ENCODE measurements at regions of chr12 and their contacts with region 1.

Region 1: GRCh38 chr12:3299929-3300832 is 190.8 kb upstream of the PRMT8 start:
- DNase-seq: peak; percentile 70
- H3K4me3 ChIP-seq: peak overlapping the region; percentile 32
- CTCF ChIP-seq: peak; percentile 94

Region 2: GRCh38 chr12:3102691-3103410 is 197.3 kb before region 1 on chr12:
- CTCF ChIA-PET with region 1: interaction called, 11 read pairs
- POLR2A ChIA-PET with region 1: no interaction called
- DNase-seq: no peak
- H3K4me3 ChIP-seq: no peak overlapping the region
- CTCF ChIP-seq: no peak

Region 3: DNA sequence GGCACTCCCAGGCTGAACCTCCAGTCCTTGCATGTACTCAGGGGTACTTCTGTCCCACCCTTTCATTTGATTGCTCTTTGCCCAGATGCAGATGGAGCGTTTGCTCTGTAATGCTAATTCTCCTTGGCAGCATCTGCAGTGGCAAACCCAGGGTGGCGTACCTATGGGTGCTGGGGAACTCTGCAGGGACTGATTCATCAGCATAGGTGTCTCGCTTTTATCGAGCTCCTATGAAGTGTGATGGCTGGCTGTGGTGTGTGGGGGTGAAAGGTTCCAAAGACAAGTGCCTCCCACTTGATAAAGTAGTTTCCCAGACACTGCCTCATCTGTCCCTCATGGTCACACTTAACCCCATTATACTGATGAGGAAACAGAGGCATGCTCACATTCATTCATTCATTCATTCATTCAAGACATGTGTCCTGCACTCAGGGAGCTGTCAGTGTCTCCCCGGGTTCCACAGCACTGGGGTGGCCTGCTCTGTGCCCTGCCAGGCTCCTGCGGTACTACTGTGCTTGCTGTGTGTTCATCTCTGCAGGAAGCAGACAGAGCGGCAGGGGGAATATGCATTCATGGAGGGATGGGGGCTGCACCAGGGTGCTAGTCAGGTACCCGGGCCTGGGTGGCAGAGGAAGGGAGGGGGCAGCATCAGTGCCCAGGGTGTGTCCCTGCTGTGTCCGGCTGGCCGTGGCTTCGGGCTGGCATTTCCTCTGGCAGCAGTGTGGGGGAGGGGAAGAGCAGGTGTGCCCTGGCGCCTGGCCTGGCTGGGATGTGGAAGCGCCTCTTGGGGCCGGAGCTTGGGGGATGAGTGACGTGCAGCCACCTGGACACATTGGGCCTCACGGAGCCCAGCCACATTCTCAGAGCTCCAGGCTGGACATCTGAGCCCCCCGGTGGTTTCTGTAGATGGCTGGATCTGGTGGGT is 112.1 kb before region 1 on chr12:
- CTCF ChIA-PET with region 1: no interaction called
- POLR2A ChIA-PET with region 1: no interaction called
- DNase-seq: no peak
- H3K4me3 ChIP-seq: no peak overlapping the region
- CTCF ChIP-seq: no peak

Region 4: GRCh38 chr12:3288690-3289089 is 11.5 kb before region 1 on chr12:
- CTCF ChIA-PET with region 1: interaction called, 85 read pairs
- POLR2A ChIA-PET with region 1: no interaction called
- DNase-seq: no peak
- H3K4me3 ChIP-seq: no peak overlapping the region
- CTCF ChIP-seq: no peak

Region 5: DNA sequence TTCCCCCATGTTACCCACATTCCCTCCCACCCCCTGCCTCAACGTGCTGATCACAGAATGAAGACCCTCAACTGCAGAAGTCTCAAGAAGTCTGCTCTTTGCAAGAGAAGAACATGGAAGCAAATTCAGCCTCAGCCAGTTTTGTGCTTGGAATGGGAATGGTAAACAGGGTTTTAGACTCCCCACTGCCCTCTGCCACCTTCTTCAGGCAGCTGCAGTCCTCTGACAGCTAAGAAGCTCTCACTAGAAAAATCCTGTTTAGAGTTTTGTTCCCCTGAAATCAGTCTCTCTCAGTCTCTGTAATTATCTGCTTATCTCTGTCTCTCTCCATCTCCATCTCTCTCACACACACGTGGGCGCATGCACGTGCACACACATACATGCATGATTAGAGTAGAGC is 367.3 kb after region 1 on chr12:
- CTCF ChIA-PET with region 1: interaction called, 10 read pairs
- POLR2A ChIA-PET with region 1: no interaction called
- DNase-seq: no peak
- H3K4me3 ChIP-seq: no peak overlapping the region
- CTCF ChIP-seq: peak; percentile 1

Region 6: GRCh38 chr12:3757261-3757660 is 457.1 kb after region 1 on chr12:
- CTCF ChIA-PET with region 1: interaction called, 16 read pairs
- POLR2A ChIA-PET with region 1: no interaction called
- DNase-seq: no peak
- H3K4me3 ChIP-seq: no peak overlapping the region
- CTCF ChIP-seq: no peak

Region 7: DNA sequence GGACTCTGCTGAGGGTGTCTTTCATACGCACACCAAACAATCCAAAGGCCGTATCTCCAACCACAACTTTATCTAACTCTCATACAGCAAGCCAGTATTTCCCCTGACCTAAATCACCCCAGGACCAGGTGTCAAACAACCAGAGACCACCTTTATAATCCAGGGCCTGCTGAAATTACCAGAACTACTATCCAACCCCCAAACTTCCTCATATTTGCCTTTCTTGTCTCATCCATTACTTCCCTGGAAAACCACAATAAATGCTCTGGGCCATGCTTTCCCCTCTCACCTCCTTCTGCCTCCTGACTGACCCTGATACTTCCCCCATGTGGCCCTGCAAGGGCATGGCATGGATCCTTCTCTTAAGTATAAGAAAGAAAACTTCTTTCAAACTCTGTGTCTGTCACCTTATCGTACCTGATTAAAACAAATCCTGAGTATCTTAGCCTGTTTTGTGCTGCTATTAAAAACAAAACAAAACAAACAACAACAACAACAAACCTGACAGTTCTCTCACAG is 497.4 kb after region 1 on chr12:
- CTCF ChIA-PET with region 1: interaction called, 80 read pairs
- POLR2A ChIA-PET with region 1: no interaction called
- DNase-seq: no peak
- H3K4me3 ChIP-seq: no peak overlapping the region
- CTCF ChIP-seq: no peak

Region 8: GRCh38 chr12:4276524-4277204 is 976.5 kb after region 1 on chr12:
- CTCF ChIA-PET with region 1: interaction called, 16 read pairs
- POLR2A ChIA-PET with region 1: interaction called, 4 read pairs
- DNase-seq: peak; percentile 7
- H3K4me3 ChIP-seq: no peak overlapping the region
- CTCF ChIP-seq: peak; percentile 89

Measured in AG04449 (cell line).